A549 (cell line): ENCODE measurements at regions of chr10 and their contacts with region 1.

Region 1: GRCh38 chr10:120336911-120337540 is 120.0 kb upstream of the PLPP4 start:
- DNase-seq: peak; percentile 3 to 49
- ATAC-seq: peak in 1 of 2 experiments; percentile 69; a peak in 3 of 6 replicates
- H3K4me3 ChIP-seq: no peak overlapping the region
- H3K27ac ChIP-seq: no peak overlapping the region
- H3K4me1 ChIP-seq: no peaks in the 10 kb centered on the region
- CTCF ChIP-seq: peak; percentile 63
- EP300 ChIP-seq: no peak
- POLR2A ChIP-seq: no peak
- RAD21 ChIP-seq: peak; percentile 39 to 56; a peak in 4 of 5 replicates

Region 2: DNA sequence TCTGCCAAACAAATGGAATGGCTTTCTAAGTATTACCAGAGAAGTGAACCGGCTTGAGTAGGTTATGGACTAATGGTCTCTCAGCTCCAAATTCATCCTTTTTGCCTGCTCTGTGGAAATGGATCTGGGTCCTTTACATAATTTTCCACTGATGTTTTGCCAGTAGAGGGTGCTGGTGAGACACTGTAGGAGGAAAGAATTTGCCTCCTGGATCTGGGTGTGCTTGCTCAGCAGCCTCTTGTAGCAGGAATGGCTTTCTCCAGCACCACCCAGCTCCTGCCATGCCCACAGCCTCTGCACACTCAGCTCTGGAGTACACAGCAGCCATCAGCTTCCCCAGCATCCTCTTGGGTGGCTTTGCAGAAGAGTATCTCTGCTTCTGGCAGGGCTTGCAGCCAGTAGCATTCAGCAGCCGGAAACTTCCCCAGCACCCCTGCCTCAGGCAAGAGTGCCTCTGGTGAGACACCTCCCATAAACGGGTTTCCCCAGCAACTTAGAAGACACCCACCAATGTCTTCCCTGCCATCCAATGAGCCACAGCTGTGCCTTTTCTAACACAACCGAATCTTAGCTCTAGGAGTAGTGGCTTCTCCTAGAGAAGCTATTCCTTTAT is 115.0 kb before region 1 on chr10:
- CTCF ChIA-PET with region 1: interaction called, 12 read pairs
- POLR2A ChIA-PET with region 1: no interaction called
- DNase-seq: peak; percentile 61 to 65
- ATAC-seq: peak; percentile 87 to 94
- H3K4me3 ChIP-seq: no peak overlapping the region
- H3K27ac ChIP-seq: no peak overlapping the region
- H3K4me1 ChIP-seq: no peaks in the 10 kb centered on the region
- CTCF ChIP-seq: peak; percentile 62
- EP300 ChIP-seq: no peak
- POLR2A ChIP-seq: no peak
- RAD21 ChIP-seq: peak; percentile 57 to 74

Region 3: DNA sequence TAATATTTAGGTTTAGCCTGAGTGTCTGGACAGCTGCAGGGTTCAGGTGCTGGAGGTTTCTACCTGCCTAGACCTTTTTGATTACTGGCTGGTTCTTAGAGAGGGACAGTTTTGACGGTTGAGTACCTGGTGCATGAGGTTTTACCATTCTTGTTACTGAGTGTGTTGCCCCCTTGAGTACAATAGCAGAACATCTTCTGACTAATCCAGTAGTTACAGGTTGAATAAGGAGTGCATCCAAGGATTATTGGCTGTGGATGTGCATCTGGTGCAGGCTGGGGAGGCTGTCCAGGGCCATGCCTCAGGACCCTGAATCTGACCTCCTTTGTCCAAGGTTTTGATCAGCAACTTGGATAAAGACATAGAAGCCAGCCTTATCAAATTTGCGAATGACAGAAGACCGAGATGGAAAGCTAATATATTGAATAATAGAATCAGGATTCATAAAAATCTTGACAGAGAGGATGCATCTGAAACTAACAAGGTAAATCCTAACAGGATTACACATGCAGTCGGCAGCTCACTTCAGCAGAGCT is 143.1 kb after region 1 on chr10:
- CTCF ChIA-PET with region 1: no interaction called
- POLR2A ChIA-PET with region 1: no interaction called
- DNase-seq: no peak
- ATAC-seq: 0 out of 6 replicates have a peak, but pooled peaks of 1 of the 2 experiments have one; percentile 24
- H3K4me3 ChIP-seq: no peak overlapping the region
- H3K27ac ChIP-seq: no peak overlapping the region
- H3K4me1 ChIP-seq: no peaks in the 10 kb centered on the region
- CTCF ChIP-seq: no peak
- EP300 ChIP-seq: no peak
- POLR2A ChIP-seq: no peak
- RAD21 ChIP-seq: no peak

Region 4: GRCh38 chr10:120530699-120531098 is 193.7 kb after region 1 on chr10:
- CTCF ChIA-PET with region 1: no interaction called
- POLR2A ChIA-PET with region 1: no interaction called
- DNase-seq: no peak
- ATAC-seq: no peak
- H3K4me3 ChIP-seq: no peak overlapping the region
- H3K27ac ChIP-seq: no peak overlapping the region
- H3K4me1 ChIP-seq: no peaks in the 10 kb centered on the region
- CTCF ChIP-seq: no peak
- EP300 ChIP-seq: no peak
- POLR2A ChIP-seq: no peak
- RAD21 ChIP-seq: no peak

Region 5: GRCh38 chr10:120574981-120575380 is 238.0 kb after region 1 on chr10:
- CTCF ChIA-PET with region 1: no interaction called
- POLR2A ChIA-PET with region 1: no interaction called
- DNase-seq: no peak
- ATAC-seq: no peak
- H3K4me3 ChIP-seq: no peak overlapping the region
- H3K27ac ChIP-seq: no peak overlapping the region
- H3K4me1 ChIP-seq: no peaks in the 10 kb centered on the region
- CTCF ChIP-seq: no peak
- EP300 ChIP-seq: no peak
- POLR2A ChIP-seq: no peak
- RAD21 ChIP-seq: no peak

Region 6: GRCh38 chr10:120969219-120969645 is 632.2 kb after region 1 on chr10:
- CTCF ChIA-PET with region 1: no interaction called
- POLR2A ChIA-PET with region 1: no interaction called
- DNase-seq: no peak
- ATAC-seq: no peak
- H3K4me3 ChIP-seq: no peak overlapping the region
- H3K27ac ChIP-seq: no peak overlapping the region
- H3K4me1 ChIP-seq: no peaks in the 10 kb centered on the region
- CTCF ChIP-seq: no peak
- EP300 ChIP-seq: no peak
- POLR2A ChIP-seq: no peak
- RAD21 ChIP-seq: no peak